ENCODE measurements at regions of chr14 and their contacts with region 1.

Region 1: GRCh38 chr14:51989293-51990234 is at the start of gene RTRAF:
- DNase-seq: peak; percentile 91 to 93 (median 92)
- H3K4me3 ChIP-seq: peak within 1 kb of the TSS; percentile 63 to 80
- H3K4me3 Mint-ChIP-seq: peak within 1 kb of the TSS; percentile 93 to 100 (median 98)
- H3K27ac ChIP-seq: peak within 1 kb of the TSS; percentile 87
- H3K27ac Mint-ChIP-seq: peak within 1 kb of the TSS; percentile 87 to 100 (median 98)
- H3K4me1 ChIP-seq: peaks cover 42% of the 10 kb centered on the region
- H3K4me1 Mint-ChIP-seq: peaks cover 27 to 39% (median 30%) of the 10 kb centered on the region in 4 donors
- H3K27me3 ChIP-seq: no peaks in the 10 kb centered on the region
- H3K27me3 Mint-ChIP-seq: no peaks in the 10 kb centered on the region
- total RNA-seq, gene RTRAF: 105 to 114 TPM

Region 2: DNA sequence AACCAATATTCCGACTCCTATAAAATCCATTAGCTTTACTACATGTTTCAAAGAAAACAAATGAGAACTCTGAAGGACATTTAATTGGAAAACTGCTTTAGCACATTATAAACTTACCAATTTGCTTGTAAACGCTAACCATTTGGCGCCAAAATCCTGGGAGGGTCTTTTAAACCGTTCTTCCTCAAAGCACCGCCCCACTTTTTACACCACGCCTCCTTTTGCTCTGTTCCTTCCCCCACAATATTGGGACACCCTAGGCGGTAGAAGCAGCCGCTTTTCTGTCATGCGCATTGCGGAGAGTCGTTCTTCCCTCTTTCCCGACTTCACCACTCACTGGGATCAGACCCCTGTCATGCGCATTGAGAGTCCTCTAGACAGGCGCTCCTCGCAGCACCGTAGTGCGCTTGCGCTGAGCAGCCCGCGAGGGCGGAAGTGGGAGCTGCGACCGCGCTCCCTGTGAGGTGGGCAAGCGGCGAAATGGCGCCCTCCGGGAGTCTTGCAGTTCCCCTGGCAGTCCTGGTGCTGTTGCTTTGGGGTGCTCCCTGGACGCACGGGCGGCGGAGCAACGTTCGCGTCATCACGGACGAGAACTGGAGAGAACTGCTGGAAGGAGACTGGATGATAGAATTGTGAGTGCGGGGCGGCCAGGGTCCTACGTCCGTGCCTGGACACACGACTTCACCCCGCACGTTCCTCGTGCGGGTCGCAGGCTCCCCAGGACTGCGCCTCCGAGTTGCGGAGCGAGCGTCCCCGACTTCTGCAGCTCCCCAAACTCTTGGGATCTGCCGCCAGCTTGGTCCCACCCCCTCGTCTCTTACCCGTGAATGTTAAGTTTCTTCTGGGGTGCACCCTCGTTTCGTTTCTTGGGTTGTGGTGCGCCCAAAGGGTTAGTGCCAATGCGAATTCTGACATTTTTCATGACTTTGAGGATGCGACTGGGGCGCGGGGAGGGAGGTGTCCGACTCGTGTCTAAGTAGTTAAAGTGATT is 749.5 kb before region 1 on chr14 and contains the start of gene TMX1:
- CTCF ChIA-PET with region 1: no interaction called
- POLR2A ChIA-PET with region 1: no interaction called
- intact Hi-C with region 1: loop called (anchors 1 kb)
- DNase-seq: peak; percentile 80 to 86 (median 82)
- H3K4me3 ChIP-seq: peak within 1 kb of the TSS; percentile 84 to 99
- H3K4me3 Mint-ChIP-seq: peak within 1 kb of the TSS in 1 of 8 donors; percentile 37
- H3K27ac ChIP-seq: peak within 1 kb of the TSS; percentile 65
- H3K27ac Mint-ChIP-seq: no peak within 1 kb of the TSS
- H3K4me1 ChIP-seq: peaks cover 51% of the 10 kb centered on the region
- H3K4me1 Mint-ChIP-seq: peaks cover 15 to 29% (median 21%) of the 10 kb centered on the region in 4 donors
- H3K27me3 ChIP-seq: no peaks in the 10 kb centered on the region
- H3K27me3 Mint-ChIP-seq: no peaks in the 10 kb centered on the region
- total RNA-seq, gene TMX1: 28.5 to 32.9 TPM

Region 3: DNA sequence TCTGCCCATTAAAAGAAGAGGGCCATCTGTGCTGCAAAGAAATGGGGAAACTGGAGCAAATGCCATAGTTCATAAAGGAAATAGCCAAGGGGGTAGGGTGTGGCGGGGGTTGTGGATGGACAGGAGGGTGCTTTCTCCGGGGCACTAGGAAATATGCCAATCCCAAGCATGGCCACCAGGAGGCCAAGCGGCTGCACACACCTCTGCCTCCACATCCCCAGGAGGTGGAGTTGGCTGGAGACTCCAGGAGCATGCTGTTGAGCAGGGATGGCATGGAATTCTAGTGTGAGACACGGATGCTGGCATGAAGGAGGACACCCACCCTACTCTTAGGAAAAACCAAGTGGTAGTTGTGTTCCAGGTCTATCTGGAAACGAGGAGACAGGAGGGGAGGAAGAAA is 54.1 kb after region 1 on chr14:
- CTCF ChIA-PET with region 1: no interaction called
- POLR2A ChIA-PET with region 1: no interaction called
- intact Hi-C with region 1: no loop called
- DNase-seq: peak in 4 of 5 donors; percentile 9 to 32 (median 22)
- H3K4me3 ChIP-seq: no peak overlapping the region
- H3K4me3 Mint-ChIP-seq: peak overlapping the region in 1 of 8 donors; percentile 2
- H3K27ac ChIP-seq: no peak overlapping the region
- H3K27ac Mint-ChIP-seq: peak overlapping the region in 1 of 7 donors; percentile 57
- H3K4me1 ChIP-seq: no peaks in the 10 kb centered on the region
- H3K4me1 Mint-ChIP-seq: peaks cover 0 to 4% (median 1%) of the 10 kb centered on the region in 4 donors
- H3K27me3 ChIP-seq: no peaks in the 10 kb centered on the region
- H3K27me3 Mint-ChIP-seq: peaks cover 0 to 3% of the 10 kb centered on the region in 2 donors

Region 4: DNA sequence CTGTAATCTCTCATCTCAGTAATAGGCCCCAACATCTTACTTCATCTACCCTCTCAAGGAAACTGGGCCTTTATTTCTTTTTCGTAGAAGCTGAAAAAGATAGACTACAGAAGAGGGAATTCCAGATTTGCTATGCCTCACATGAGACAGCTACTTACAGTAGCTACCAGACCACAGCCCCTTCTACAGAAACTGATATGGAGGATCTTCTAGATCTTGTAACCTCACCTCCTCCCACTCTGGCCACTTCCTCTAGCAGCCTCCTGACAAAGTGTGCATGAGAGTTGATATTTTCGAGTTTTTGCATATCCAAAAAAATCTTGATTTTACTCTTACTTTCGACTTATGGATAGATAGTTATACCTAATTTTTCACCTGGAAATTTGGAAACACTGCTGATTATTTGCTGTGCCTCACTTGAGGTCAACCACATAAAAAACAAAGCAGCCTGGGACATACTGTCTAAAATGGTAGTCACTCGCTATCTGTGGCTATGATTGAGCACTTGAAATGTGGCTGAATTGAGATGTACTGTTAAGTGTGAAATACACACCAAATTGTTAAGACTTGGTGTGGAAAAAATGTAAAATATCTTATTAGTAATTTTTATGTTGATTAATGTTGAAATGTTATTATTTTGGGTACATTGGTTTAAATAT is 165.6 kb after region 1 on chr14:
- CTCF ChIA-PET with region 1: no interaction called
- POLR2A ChIA-PET with region 1: no interaction called
- intact Hi-C with region 1: no loop called
- DNase-seq: no peak
- H3K4me3 ChIP-seq: no peak overlapping the region
- H3K4me3 Mint-ChIP-seq: peak overlapping the region in 5 of 8 donors; percentile 28 to 78 (median 49)
- H3K27ac ChIP-seq: no peak overlapping the region
- H3K27ac Mint-ChIP-seq: peak overlapping the region in 3 of 7 donors; percentile 69 to 85 (median 76)
- H3K4me1 ChIP-seq: peaks cover 28% of the 10 kb centered on the region
- H3K4me1 Mint-ChIP-seq: peaks cover 17 to 35% (median 22%) of the 10 kb centered on the region in 4 donors
- H3K27me3 ChIP-seq: no peaks in the 10 kb centered on the region
- H3K27me3 Mint-ChIP-seq: no peaks in the 10 kb centered on the region

Region 5: GRCh38 chr14:52175982-52176502 is 186.5 kb after region 1 on chr14:
- CTCF ChIA-PET with region 1: no interaction called
- POLR2A ChIA-PET with region 1: no interaction called
- intact Hi-C with region 1: loop called (anchors 5 kb)
- DNase-seq: peak; percentile 51 to 66 (median 58)
- H3K4me3 ChIP-seq: peak overlapping the region in 1 of 2 donors; percentile 1
- H3K4me3 Mint-ChIP-seq: peak overlapping the region; percentile 62 to 83 (median 75)
- H3K27ac ChIP-seq: peak overlapping the region; percentile 42
- H3K27ac Mint-ChIP-seq: peak overlapping the region; percentile 69 to 92 (median 90)
- H3K4me1 ChIP-seq: peaks cover 50% of the 10 kb centered on the region
- H3K4me1 Mint-ChIP-seq: peaks cover 22 to 42% (median 32%) of the 10 kb centered on the region in 4 donors
- H3K27me3 ChIP-seq: no peaks in the 10 kb centered on the region
- H3K27me3 Mint-ChIP-seq: no peaks in the 10 kb centered on the region

Region 6: DNA sequence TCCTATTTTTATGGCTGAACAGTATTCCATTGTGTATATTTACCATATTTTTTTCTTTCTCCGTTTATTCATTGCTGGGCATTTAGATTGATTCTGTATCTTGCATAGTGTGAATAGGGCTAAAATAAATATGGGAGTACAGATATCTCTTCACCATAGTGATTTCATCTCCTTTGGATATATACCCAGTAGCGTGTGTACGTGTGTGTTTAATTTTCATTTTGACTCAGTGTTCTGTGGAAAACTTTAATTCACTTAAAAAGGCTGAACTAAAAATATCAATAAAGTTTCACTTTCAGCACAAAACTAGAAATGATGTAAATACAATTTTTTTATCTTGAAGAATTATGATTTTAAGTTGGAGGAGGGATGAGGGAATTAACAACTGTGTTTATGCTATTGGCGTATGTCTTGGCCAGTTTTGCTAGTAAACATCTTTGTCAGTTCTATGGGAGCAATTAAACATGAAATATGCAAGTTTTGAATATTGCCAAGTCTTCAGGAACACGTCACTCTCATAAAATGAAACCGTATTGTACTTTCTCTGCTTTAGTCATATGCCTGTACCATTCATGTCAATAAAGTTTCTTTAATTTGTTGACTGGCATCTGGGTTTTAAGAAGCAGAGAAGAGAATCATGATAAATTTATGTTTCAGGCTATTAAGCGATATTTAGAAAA is 424.3 kb after region 1 on chr14:
- CTCF ChIA-PET with region 1: no interaction called
- POLR2A ChIA-PET with region 1: no interaction called
- intact Hi-C with region 1: loop called (anchors 10 kb)
- DNase-seq: no peak
- H3K4me3 ChIP-seq: no peak overlapping the region
- H3K4me3 Mint-ChIP-seq: peak overlapping the region; percentile 11 to 78 (median 48)
- H3K27ac ChIP-seq: no peak overlapping the region
- H3K27ac Mint-ChIP-seq: peak overlapping the region in 3 of 7 donors; percentile 9 to 50 (median 24)
- H3K4me1 ChIP-seq: peaks cover 14% of the 10 kb centered on the region
- H3K4me1 Mint-ChIP-seq: peaks cover 16 to 54% (median 22%) of the 10 kb centered on the region in 4 donors
- H3K27me3 ChIP-seq: no peaks in the 10 kb centered on the region
- H3K27me3 Mint-ChIP-seq: no peaks in the 10 kb centered on the region